SK-N-SH (cell line): ENCODE measurements at regions of chrX and their contacts with region 1.

Region 1: GRCh38 chrX:115268421-115268820 is 21.1 kb upstream of the LUZP4 start:
- DNase-seq: no peak
- H3K4me3 ChIP-seq: no peak overlapping the region
- H3K27ac ChIP-seq: no peak overlapping the region
- H3K4me1 ChIP-seq: no peaks in the 10 kb centered on the region
- H3K27me3 ChIP-seq: no peaks in the 10 kb centered on the region
- CTCF ChIP-seq: peak; percentile 43
- EP300 ChIP-seq: no peak
- RAD21 ChIP-seq: no peak; the same call in 1 of the 2 replicates

Region 2: GRCh38 chrX:115284877-115285276 is 16.5 kb after region 1 on chrX:
- CTCF ChIA-PET with region 1: interaction called, 11 read pairs
- POLR2A ChIA-PET with region 1: no interaction called
- DNase-seq: no peak
- H3K4me3 ChIP-seq: no peak overlapping the region
- H3K27ac ChIP-seq: no peak overlapping the region
- H3K4me1 ChIP-seq: no peaks in the 10 kb centered on the region
- H3K27me3 ChIP-seq: no peaks in the 10 kb centered on the region; the same call in 1 of the 2 replicates
- CTCF ChIP-seq: peak; percentile 31
- EP300 ChIP-seq: no peak
- RAD21 ChIP-seq: peak; percentile 45

Region 3: DNA sequence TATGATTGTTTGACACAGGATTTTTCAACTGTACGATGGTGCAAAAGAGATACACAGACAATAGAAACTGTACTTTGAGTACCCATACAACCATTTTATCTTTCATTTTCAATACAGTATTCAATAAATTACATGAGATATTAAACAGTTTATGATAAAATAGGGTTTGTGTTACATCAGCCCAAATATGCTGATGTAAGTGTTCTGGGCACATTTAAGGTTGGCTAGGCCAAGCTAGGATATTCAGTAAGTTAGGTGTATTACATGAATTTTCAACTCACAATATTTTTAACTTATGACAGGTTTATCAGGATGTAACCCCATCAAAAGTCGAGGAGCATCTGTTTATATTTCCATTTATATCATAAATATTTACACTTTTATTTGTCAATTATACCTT is 249.7 kb after region 1 on chrX:
- CTCF ChIA-PET with region 1: no interaction called
- POLR2A ChIA-PET with region 1: no interaction called
- DNase-seq: no peak
- H3K4me3 ChIP-seq: no peak overlapping the region
- H3K27ac ChIP-seq: no peak overlapping the region
- H3K4me1 ChIP-seq: no peaks in the 10 kb centered on the region
- H3K27me3 ChIP-seq: no peaks in the 10 kb centered on the region
- CTCF ChIP-seq: no peak
- EP300 ChIP-seq: no peak
- RAD21 ChIP-seq: no peak